ENCODE measurements at regions of chr3 and their contacts with region 1.

Region 1: GRCh38 chr3:14461748-14462324 is 59.4 kb downstream of the SLC6A6 start:
- DNase-seq: peak in 1 of 6 donors; percentile 45
- ATAC-seq: peak in 3 of 4 donors; percentile 39 to 60 (median 55)
- H3K4me3 ChIP-seq: no peak overlapping the region
- H3K27ac ChIP-seq: no peak overlapping the region
- H3K4me1 ChIP-seq: peaks cover 0 to 23% (median 0%) of the 10 kb centered on the region in 3 donors
- H3K27me3 ChIP-seq: no peaks in the 10 kb centered on the region
- CTCF ChIP-seq: no peak

Region 2: DNA sequence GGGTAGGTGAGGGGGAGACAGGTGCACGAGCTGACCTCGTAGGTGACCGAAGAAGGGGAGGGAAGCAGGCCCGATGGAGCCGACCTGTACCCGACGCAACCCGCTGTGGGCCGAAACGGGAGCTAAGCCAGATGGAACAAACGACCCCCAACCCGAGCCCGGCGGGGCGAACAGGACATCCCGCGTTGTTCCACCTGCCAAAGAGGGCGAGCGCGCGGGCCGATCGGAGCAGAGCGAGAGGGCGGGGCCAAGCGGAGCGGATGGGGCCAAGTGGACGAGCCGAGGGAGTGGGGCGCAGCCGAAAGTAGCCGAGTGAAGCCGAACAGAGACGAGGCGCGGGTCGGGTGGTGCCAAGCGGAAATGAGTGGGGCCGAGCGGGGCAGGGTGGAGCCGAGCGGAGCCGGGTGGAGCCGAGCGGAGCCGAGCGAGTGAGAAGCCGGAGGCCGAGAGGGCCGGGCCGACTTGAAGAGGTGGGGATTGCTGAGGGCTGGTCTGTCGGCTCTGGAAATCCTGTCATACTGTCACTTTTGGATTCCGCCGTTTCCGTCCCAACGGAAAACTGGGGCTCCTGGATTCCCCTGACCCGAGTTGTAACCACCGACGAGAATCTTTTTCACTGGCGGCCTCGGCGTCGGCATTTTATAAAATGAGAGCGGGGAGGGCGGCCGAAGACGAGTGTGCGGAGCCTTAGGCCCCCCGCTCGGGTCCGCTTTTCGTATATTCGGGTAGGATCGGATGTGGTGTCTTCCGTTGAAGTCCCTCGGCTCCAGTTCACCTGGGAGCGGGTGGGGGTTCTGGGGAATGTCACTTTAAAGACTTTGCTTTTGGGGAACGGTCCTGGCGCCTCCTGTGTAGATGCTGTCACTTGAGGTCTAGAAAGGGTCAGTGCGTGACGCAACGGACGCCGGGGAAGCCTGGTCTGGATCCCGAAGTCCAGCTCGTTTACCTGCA is 566.4 kb before region 1 on chr3:
- intact Hi-C with region 1: loop called in 1 of 3 experiments (anchors 10 kb)
- DNase-seq: peak; percentile 93 to 98 (median 96)
- ATAC-seq: peak; percentile 96 to 99 (median 98)
- H3K4me3 ChIP-seq: peak overlapping the region; percentile 24 to 60 (median 52)
- H3K27ac ChIP-seq: no peak overlapping the region
- H3K4me1 ChIP-seq: peaks cover 0 to 7% (median 5%) of the 10 kb centered on the region in 3 donors
- H3K27me3 ChIP-seq: no peaks in the 10 kb centered on the region
- CTCF ChIP-seq: no peak

Region 3: GRCh38 chr3:14203521-14204079 is 258.2 kb before region 1 on chr3:
- intact Hi-C with region 1: loop called in 2 of 3 experiments (anchors 5 to 10 kb)
- DNase-seq: peak in 3 of 6 donors; percentile 41 to 73 (median 53)
- ATAC-seq: peak; percentile 77 to 91 (median 86)
- H3K4me3 ChIP-seq: no peak overlapping the region
- H3K27ac ChIP-seq: no peak overlapping the region
- H3K4me1 ChIP-seq: peaks cover 0 to 5% (median 4%) of the 10 kb centered on the region in 3 donors
- H3K27me3 ChIP-seq: no peaks in the 10 kb centered on the region
- CTCF ChIP-seq: peak; percentile 46 to 79 (median 78)

Region 4: GRCh38 chr3:14261229-14261628 is 200.6 kb before region 1 on chr3:
- intact Hi-C with region 1: loop called in 2 of 3 experiments (anchors 2 to 5 kb)
- DNase-seq: peak; percentile 59 to 93 (median 84)
- ATAC-seq: peak; percentile 68 to 97 (median 91)
- H3K4me3 ChIP-seq: no peak overlapping the region
- H3K27ac ChIP-seq: no peak overlapping the region
- H3K4me1 ChIP-seq: no peaks in the 10 kb centered on the region
- H3K27me3 ChIP-seq: no peaks in the 10 kb centered on the region
- CTCF ChIP-seq: peak; percentile 93 to 98 (median 96)